ENCODE measurements at regions of chr2 and their contacts with region 1.

Region 1: GRCh38 chr2:207840101-207840500 is 70.4 kb upstream of the FZD5 start:
- DNase-seq: no peak

Region 2: GRCh38 chr2:207662203-207662602 is 177.9 kb before region 1 on chr2:
- intact Hi-C with region 1: no loop called
- DNase-seq: no peak

Region 3: GRCh38 chr2:207828361-207829057 is 11.6 kb before region 1 on chr2:
- intact Hi-C with region 1: loop called in 1 of 2 experiments (anchors 1 kb)
- DNase-seq: peak; percentile 32